ENCODE measurements at regions of chr6 and their contacts with region 1.

Region 1: DNA sequence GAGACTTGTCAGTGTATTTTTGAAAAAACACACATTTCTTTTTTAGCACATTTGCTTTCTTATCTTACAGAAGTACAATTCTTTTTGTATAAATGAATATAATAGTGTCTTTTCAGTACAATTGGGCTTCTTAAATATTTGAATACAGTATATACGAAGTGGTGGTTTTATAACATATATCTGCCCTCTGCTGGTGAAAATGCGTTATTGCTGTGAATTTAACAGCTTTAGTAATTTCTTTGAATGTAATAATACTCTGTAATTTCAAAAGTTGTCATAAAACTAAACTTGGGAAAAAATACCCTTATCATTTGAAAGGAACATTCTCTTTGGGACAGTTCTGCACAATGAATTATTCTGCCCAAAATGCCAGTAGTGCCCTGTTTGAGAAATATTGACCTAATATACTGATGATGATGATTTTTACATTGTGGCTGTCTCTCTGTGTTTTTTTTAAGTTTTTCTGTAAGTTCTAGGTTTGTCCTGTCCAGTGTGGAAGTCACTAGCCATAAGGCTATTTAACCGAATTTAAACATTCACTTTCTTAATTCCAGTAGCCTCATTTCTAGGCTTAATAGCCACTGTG is 19.0 kb downstream of the SMAP1 start:
- H3K4me3 ChIP-seq: no peak overlapping the region
- H3K27ac ChIP-seq: no peak overlapping the region
- H3K4me1 ChIP-seq: peaks cover 24% of the 10 kb centered on the region
- CTCF ChIP-seq: peak; percentile 23; the same call in 1 of the 2 replicates

Region 2: DNA sequence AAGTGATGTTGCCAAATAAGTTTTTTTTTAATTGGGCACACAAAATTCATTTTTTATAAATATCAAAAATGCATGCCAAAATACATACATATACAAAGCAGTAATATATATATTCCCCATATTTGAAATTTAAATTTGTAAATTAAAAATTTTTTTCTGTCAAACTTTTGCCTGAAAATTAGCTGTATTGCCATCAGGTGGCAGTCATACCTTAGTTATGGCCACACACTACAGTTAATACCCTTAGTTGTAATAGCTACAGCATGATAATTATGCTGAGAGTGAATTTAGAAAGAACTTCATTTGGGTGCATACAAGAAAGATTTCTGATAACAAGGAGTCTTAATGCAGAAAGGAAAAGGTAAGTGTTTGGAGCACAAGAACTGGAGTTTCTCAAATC is 166.1 kb before region 1 on chr6:
- CTCF ChIA-PET with region 1: interaction called, 45 read pairs
- POLR2A ChIA-PET with region 1: no interaction called
- H3K4me3 ChIP-seq: no peak overlapping the region
- H3K27ac ChIP-seq: no peak overlapping the region
- H3K4me1 ChIP-seq: no peaks in the 10 kb centered on the region
- CTCF ChIP-seq: 0 out of 2 replicates have a peak, but pooled peaks have one; percentile 27

Region 3: DNA sequence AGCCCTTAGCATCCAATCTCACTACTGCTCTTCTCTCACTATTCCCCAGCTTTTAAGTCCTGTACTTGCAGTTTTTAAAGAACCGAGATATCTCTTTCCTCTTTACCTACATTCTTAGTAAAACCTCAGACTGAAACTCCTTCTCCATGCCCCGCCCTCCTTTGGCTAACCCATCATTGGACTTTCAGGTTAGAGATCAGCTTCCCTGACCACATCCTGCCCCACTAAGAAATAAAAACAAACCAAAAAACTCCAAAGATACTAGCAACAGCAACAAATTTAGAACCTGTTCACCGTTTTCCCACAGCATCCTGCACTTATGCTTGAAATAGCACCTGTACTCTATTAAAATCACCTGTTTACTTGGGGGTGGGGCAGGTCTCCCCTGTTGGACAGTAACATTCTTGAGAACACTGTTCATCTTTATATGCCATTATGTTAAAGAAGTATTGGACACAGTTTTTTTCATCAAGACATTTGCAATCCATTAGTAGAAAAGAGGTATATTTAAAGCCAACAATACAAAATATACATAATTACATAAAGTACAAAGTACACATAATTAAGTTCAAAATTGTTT is 35.2 kb before region 1 on chr6:
- CTCF ChIA-PET with region 1: interaction called, 10 read pairs
- POLR2A ChIA-PET with region 1: no interaction called
- H3K4me3 ChIP-seq: no peak overlapping the region
- H3K27ac ChIP-seq: no peak overlapping the region
- H3K4me1 ChIP-seq: no peaks in the 10 kb centered on the region
- CTCF ChIP-seq: no peak

Region 4: DNA sequence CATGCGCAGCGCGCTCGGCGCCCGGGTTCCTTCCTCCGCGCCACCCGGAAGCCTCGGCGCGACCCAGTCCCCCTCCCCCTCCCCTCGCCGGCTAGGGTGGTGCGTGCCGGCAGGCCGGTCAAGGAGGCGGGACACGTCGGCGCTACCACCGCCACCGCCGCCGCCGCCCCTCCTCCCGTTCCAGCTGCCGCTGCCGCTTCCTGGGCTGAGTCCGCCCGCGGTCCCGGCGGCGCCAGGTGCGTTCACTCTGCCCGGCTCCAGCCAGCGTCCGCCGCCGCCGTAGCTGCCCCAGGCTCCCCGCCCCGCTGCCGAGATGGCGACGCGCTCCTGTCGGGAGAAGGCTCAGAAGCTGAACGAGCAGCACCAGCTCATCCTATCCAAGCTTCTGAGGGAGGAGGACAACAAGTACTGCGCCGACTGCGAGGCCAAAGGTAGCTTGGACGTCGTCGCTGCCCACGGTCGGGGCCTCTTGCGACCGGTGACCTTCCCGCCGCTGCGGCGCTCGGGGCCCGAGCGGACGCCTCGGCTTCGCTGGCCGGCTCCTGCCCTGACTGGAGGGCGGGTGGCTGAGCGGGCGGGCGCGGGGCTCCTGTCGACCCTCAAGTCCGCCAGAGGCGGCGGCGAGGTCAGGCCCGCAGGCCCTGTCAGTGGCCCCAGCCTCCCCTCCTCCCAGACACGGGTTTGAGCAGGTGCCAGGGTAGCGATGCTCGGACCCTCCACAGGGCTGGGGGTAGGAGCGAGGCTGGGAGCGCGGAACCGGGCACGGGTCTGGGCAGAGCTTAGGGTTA is 18.7 kb before region 1 on chr6 and contains the start of gene SMAP1:
- CTCF ChIA-PET with region 1: interaction called, 32 read pairs
- POLR2A ChIA-PET with region 1: interaction called, 8 read pairs
- H3K4me3 ChIP-seq: peak within 1 kb of the TSS; percentile 93
- H3K27ac ChIP-seq: peak within 1 kb of the TSS; percentile 93
- H3K4me1 ChIP-seq: peaks cover 4% of the 10 kb centered on the region
- CTCF ChIP-seq: peak; percentile 22; the same call in 1 of the 2 replicates

Region 5: DNA sequence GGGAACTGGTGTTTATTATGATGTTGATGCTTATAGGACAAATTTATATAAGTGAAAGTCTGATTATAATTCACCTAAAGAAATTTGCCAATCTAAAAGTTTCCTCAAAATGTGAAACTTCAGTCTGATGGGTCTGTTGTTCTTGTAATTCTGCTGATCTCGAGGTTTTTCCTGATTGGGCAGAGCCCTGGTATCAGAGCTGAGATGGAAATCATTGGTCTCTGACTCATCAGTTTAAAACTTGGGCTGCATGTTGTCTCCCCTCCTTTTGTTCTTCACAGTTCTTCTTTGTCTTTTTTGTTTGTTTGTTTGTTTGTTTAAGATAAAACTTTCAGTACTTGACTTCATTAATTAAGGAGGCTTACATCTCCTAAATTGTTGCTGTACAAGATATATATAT is 13.0 kb before region 1 on chr6:
- CTCF ChIA-PET with region 1: interaction called, 32 read pairs
- POLR2A ChIA-PET with region 1: interaction called, 8 read pairs
- H3K4me3 ChIP-seq: no peak overlapping the region
- H3K27ac ChIP-seq: no peak overlapping the region
- H3K4me1 ChIP-seq: peaks cover 15% of the 10 kb centered on the region
- CTCF ChIP-seq: no peak

Region 6: DNA sequence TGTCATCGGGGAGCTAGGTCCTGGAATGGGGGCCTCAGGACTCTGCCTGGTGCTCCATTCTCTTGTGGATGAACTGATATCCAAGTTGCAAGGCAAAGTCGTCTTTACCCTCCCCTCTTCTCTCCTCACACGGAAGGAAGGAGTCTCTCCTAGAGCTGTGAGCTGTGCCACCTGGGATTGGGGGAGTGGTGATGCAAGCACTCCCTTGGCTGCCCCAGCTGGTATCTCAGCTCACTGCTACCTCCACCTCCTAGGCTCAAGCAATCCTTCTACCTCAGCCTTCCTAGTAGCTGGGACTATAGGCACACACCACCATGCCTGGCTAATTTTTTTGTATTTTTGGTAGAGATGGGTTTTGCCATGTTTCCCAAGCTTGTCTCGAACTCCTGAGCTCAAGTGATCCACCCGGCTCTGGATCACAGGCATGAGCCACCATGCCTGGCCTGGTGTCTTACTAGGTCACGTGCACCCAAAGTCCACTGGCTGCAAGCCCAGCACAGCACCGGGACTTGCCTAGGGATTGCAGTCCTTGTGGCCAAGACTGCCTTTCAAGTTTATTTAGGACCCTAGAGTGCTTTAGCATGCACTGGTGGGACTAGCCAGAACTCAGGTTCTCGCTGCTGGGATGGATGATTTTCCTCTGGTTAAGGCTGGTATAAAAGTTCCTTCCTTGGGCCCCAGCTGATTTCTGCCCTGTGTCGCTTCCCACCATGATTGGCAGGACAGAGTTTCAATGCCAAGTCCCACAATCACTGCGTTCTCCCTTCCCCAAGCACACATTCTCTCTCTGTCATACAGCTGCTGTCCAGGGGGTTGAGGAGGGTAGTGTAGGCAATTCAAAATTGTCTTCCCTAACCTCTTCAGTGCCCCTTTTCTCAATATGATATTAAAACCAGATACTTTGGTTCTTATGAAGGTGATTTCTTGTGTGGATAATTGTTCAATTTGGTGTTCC is 14.6 kb after region 1 on chr6:
- CTCF ChIA-PET with region 1: interaction called, 11 read pairs
- POLR2A ChIA-PET with region 1: no interaction called
- H3K4me3 ChIP-seq: no peak overlapping the region
- H3K27ac ChIP-seq: no peak overlapping the region
- H3K4me1 ChIP-seq: no peaks in the 10 kb centered on the region
- CTCF ChIP-seq: no peak

Region 7: DNA sequence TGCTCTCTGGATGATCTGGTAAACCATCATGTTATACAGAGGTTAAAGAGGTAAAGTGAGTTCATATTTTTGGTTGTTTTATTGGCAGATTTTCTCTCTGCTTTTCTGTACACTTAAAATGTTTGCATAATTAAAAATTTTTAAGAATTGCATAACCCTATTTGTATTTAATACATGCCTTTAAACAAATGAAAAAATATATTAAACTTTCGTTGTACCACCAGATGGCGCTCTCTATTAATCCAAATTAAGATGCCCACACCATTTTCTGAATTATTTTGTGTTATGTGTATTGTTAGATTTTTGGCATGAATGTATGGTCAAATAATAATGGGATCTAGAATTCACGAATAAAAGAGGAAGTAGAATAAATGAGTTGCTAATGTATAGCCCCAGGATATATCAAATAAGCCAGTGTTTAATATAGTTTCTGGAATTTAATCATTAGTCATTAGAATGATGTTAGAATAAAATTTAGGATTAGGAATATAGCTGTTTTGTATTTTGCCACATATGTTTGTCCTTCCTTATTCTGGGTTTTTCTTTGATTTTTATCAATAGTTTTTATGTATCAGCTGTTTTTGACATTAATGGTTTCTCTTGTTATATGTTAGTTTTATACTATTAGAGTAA is 20.0 kb after region 1 on chr6:
- CTCF ChIA-PET with region 1: interaction called, 16 read pairs
- POLR2A ChIA-PET with region 1: no interaction called
- H3K4me3 ChIP-seq: no peak overlapping the region
- H3K27ac ChIP-seq: no peak overlapping the region
- H3K4me1 ChIP-seq: no peaks in the 10 kb centered on the region
- CTCF ChIP-seq: 0 out of 2 replicates have a peak, but pooled peaks have one; percentile 11